Activated T-helper 2 cell treated with anti-CD3 and anti-CD28 coated beads, Interferon-gamma antibody, Interleukin-2, Interleukin-4, amounts not matched to agents 10 μg/mL and 5 μg/mL and 100 μg/mL, durations not matched to agents 14 hours and 24 hours and 36 hours (primary cell): ENCODE measurements at regions of chr9 and their contacts with region 1.

Region 1: DNA sequence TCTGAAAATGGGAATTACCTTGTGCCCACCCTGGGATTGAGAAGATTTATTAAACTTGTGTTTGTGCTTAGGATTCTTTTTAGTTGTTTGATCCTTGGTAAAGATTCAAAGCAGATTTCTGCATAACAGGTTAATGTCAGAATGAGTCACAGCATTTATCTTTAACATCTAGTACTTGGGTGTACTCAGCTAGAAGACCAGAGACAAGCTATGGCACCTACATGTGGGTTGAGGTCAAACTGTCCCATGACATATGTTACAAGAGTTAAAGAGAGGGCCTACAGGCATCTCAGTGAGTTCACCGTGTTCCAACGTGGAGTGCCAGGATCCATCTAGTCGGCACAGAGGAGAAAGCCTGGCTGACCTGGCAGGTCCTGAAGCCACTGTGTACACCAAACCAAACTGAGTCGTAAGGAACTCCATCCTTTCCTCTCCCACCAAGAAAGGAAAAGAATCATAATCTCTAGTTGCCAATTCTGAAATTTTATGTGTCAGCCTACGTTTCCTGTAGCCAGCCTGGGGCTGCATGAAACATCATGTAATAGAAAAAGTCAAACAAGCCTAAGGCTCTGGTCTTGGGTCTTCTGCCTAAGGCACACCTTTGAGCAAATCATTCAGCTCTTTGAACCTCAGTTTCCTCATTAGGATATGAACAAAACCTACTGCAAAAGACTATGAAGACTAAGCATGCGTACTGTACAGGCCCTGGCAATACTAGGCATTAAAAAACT is 73.7 kb downstream of the RCL1 start:
- DNase-seq: peak; percentile 44
- H3K4me3 Mint-ChIP-seq: peak overlapping the region; percentile 72
- H3K27ac Mint-ChIP-seq: peak overlapping the region; percentile 95
- H3K4me1 Mint-ChIP-seq: peaks cover 59% of the 10 kb centered on the region
- H3K27me3 Mint-ChIP-seq: no peaks in the 10 kb centered on the region

Region 2: GRCh38 chr9:4792572-4793458 is 73.6 kb before region 1 on chr9 and contains the start of gene RCL1:
- intact Hi-C with region 1: loop called (anchors 1 kb)
- DNase-seq: peak; percentile 97
- H3K4me3 Mint-ChIP-seq: peak within 1 kb of the TSS; percentile 93
- H3K27ac Mint-ChIP-seq: peak within 1 kb of the TSS; percentile 90
- H3K4me1 Mint-ChIP-seq: peaks cover 40% of the 10 kb centered on the region
- H3K27me3 Mint-ChIP-seq: peaks cover 2% of the 10 kb centered on the region
- total RNA-seq, gene RCL1: 34.5 and 36.3 TPM in 2 replicates

Region 3: DNA sequence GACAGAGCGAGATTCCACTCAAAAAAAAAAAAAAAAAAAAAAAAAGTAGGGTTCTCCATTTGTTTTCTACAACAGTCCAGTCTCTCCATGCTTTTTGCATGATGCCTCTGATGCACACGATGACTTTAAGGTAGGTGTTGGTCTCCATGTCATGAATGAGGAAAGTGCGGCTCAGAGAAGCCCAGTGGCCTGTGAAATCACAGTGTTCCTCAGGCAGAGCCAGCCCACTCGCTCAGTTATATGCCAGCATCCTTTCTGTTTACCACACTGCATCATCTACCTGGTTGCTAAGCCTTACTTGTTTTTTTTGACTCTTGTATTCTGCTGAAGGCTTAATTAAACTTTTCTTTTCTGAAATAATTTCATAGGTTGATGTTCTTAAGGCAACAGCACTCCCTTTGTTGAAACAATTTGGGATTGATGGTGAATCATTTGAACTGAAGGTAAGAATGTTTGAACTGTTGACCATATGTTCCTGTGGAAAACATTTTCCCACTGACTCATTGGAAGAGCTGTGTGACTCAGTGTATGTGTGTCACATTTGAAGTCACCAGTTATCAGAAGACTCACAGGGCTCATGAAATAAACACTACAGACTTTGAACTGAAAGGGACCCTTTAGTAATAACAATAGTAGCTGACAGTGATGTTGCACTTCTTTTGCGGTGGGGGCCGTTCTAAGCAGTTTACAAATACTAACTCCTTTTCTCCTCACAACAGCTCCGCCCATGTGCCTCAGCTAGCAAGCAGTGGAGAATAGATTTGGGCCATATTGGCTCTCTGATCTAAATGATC is 33.4 kb before region 1 on chr9:
- intact Hi-C with region 1: loop called (anchors 1 kb)
- DNase-seq: peak; percentile 27
- H3K4me3 Mint-ChIP-seq: no peak overlapping the region
- H3K27ac Mint-ChIP-seq: peak overlapping the region; percentile 93
- H3K4me1 Mint-ChIP-seq: peaks cover 47% of the 10 kb centered on the region
- H3K27me3 Mint-ChIP-seq: no peaks in the 10 kb centered on the region

Region 4: GRCh38 chr9:4923580-4924544 is 57.5 kb after region 1 on chr9:
- intact Hi-C with region 1: loop called (anchors 2 kb)
- DNase-seq: no peak
- H3K4me3 Mint-ChIP-seq: no peak overlapping the region
- H3K27ac Mint-ChIP-seq: peak overlapping the region; percentile 83
- H3K4me1 Mint-ChIP-seq: peaks cover 48% of the 10 kb centered on the region
- H3K27me3 Mint-ChIP-seq: no peaks in the 10 kb centered on the region

Region 5: DNA sequence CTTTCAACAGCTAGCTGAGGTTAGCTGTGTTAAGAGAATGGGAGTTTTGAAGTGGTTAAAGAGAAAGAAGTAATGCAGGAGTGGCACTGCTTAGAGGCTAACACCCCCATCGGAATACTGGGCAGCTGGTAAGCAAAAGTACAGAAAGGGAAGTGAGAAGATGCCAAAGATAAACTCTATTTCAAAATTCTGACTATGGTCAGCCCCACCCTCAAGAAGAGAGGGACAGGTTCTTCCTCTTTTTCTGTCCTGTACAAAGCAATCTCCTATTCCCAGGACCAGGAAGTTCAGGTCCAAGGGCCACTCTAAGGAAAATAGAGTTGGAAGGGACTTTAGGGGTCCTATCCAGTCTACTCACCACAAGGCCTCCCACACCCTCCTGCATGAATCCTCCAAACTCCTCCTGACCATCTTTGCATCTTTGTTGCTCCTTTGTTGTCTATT is 72.7 kb after region 1 on chr9:
- intact Hi-C with region 1: loop called (anchors 1 kb)
- DNase-seq: peak; percentile 39
- H3K4me3 Mint-ChIP-seq: peak overlapping the region; percentile 14
- H3K27ac Mint-ChIP-seq: peak overlapping the region; percentile 90
- H3K4me1 Mint-ChIP-seq: peaks cover 65% of the 10 kb centered on the region
- H3K27me3 Mint-ChIP-seq: no peaks in the 10 kb centered on the region

Region 6: GRCh38 chr9:4970970-4971641 is 104.7 kb after region 1 on chr9:
- intact Hi-C with region 1: loop called (anchors 1 kb)
- DNase-seq: peak; percentile 57
- H3K4me3 Mint-ChIP-seq: no peak overlapping the region
- H3K27ac Mint-ChIP-seq: no peak overlapping the region
- H3K4me1 Mint-ChIP-seq: peaks cover 29% of the 10 kb centered on the region
- H3K27me3 Mint-ChIP-seq: no peaks in the 10 kb centered on the region